Activated naive CD4-positive, alpha-beta T cell treated with anti-CD3 and anti-CD28 coated beads for 36 hours (primary cell): ENCODE measurements at regions of chr10 and their contacts with region 1.

Region 1: GRCh38 chr10:14325325-14325955 is 5.3 kb downstream of the FRMD4A start:
- DNase-seq: peak; percentile 84
- H3K4me3 Mint-ChIP-seq: no peak overlapping the region
- H3K27ac Mint-ChIP-seq: no peak overlapping the region
- H3K4me1 Mint-ChIP-seq: no peaks in the 10 kb centered on the region
- H3K27me3 Mint-ChIP-seq: peaks cover 24% of the 10 kb centered on the region

Region 2: GRCh38 chr10:14200698-14201544 is 124.5 kb before region 1 on chr10:
- CTCF ChIA-PET with region 1: interaction called, 5 read pairs
- intact Hi-C with region 1: loop called (anchors 1 kb)
- DNase-seq: peak; percentile 29
- H3K4me3 Mint-ChIP-seq: no peak overlapping the region
- H3K27ac Mint-ChIP-seq: no peak overlapping the region
- H3K4me1 Mint-ChIP-seq: no peaks in the 10 kb centered on the region
- H3K27me3 Mint-ChIP-seq: peaks cover 6% of the 10 kb centered on the region